ENCODE measurements at regions of chr15 and their contacts with region 1.

Region 1: DNA sequence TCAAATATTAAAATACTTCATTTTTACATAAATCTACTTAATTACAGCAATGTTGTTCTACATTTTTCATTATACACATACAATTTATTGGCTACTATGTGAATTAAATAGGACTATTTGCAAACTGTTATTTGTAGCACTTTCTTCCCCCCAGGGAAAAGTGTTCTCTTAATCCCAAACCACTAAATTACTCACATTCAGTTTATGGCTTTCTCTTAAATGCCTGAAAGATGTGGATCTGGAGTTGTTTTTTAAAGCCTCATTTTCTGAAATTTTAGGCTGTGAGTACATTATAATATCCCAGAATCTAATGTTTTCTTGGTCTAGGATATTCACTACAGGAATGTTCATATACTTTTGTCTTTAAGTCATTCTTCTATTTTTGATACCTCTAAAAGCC is 32.7 kb downstream of the PRTG start:
- DNase-seq: no peak
- H3K4me3 ChIP-seq: no peak overlapping the region
- H3K27ac ChIP-seq: no peak overlapping the region
- H3K4me1 ChIP-seq: no peaks in the 10 kb centered on the region
- H3K27me3 ChIP-seq: no peaks in the 10 kb centered on the region
- CTCF ChIP-seq: no peak

Region 2: GRCh38 chr15:55669270-55669669 is 41.0 kb before region 1 on chr15:
- CTCF ChIA-PET with region 1: no interaction called
- dilution Hi-C with region 1: no loop called
- in situ Hi-C with region 1: no loop called
- intact Hi-C with region 1: no loop called
- DNase-seq: no peak
- H3K4me3 ChIP-seq: no peak overlapping the region
- H3K27ac ChIP-seq: no peak overlapping the region
- H3K4me1 ChIP-seq: no peaks in the 10 kb centered on the region
- H3K27me3 ChIP-seq: peaks cover 2% of the 10 kb centered on the region
- CTCF ChIP-seq: no peak

Region 3: GRCh38 chr15:55698653-55699052 is 11.6 kb before region 1 on chr15:
- CTCF ChIA-PET with region 1: no interaction called
- dilution Hi-C with region 1: no loop called
- in situ Hi-C with region 1: no loop called
- intact Hi-C with region 1: loop called (anchors 1 kb)
- DNase-seq: no peak
- H3K4me3 ChIP-seq: no peak overlapping the region
- H3K27ac ChIP-seq: no peak overlapping the region
- H3K4me1 ChIP-seq: no peaks in the 10 kb centered on the region
- H3K27me3 ChIP-seq: peaks cover 2% of the 10 kb centered on the region
- CTCF ChIP-seq: no peak

Region 4: GRCh38 chr15:55770261-55770660 is 60.0 kb after region 1 on chr15:
- CTCF ChIA-PET with region 1: no interaction called
- dilution Hi-C with region 1: loop called (anchors 5 kb)
- in situ Hi-C with region 1: no loop called
- intact Hi-C with region 1: no loop called
- DNase-seq: no peak
- H3K4me3 ChIP-seq: no peak overlapping the region
- H3K27ac ChIP-seq: no peak overlapping the region
- H3K4me1 ChIP-seq: peaks cover 5% of the 10 kb centered on the region
- H3K27me3 ChIP-seq: no peaks in the 10 kb centered on the region
- CTCF ChIP-seq: no peak

Measured in mammary epithelial cell (primary cell).